ENCODE measurements at regions of chr4 and their contacts with region 1.

Region 1: GRCh38 chr4:105471566-105472176 is 2.2 kb downstream of the PPA2 start:
- DNase-seq: peak; percentile 43
- ATAC-seq: peak; percentile 25 to 31

Region 2: GRCh38 chr4:105140684-105141490 is 330.8 kb before region 1 on chr4:
- intact Hi-C with region 1: loop called (anchors 5 kb)
- DNase-seq: no peak
- ATAC-seq: peak; percentile 27 to 45